CD4-positive, alpha-beta memory T cell (primary cell): ENCODE measurements at regions of chrX and their contacts with region 1.

Region 1: DNA sequence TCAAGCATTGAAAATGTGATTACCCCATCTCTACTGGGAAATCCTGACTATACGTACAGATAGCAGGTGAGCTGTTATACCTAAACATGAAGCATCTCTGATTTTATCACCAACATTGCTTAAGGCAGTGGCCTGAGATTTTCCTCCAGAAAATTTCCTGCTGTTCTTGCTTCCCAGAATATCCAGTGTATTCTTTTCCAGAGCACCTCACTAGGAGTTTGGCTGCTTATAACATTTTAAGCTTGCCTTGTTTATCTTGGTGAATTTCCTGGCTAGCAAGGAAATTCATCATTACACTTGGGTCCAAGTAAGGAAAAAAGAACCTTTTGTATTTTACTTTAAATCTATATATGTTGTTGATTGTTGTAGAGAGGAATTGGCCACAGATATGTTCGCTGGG is 73.0 kb upstream of the CLCN4 start:
- DNase-seq: no peak
- H3K4me3 ChIP-seq: no peak overlapping the region
- H3K4me3 Mint-ChIP-seq: peak overlapping the region in 4 of 8 donors; percentile 10 to 81 (median 68)
- H3K27ac ChIP-seq: peak overlapping the region; percentile 64
- H3K27ac Mint-ChIP-seq: peak overlapping the region; percentile 30 to 98 (median 95)
- H3K4me1 ChIP-seq: peaks cover 55% of the 10 kb centered on the region
- H3K4me1 Mint-ChIP-seq: peaks cover 28 to 55% (median 37%) of the 10 kb centered on the region in 4 donors
- H3K27me3 ChIP-seq: no peaks in the 10 kb centered on the region
- H3K27me3 Mint-ChIP-seq: no peaks in the 10 kb centered on the region

Region 2: GRCh38 chrX:10098270-10098713 is 14.5 kb after region 1 on chrX:
- CTCF ChIA-PET with region 1: interaction called, 21 read pairs
- POLR2A ChIA-PET with region 1: interaction called, 41 read pairs
- intact Hi-C with region 1: loop called (anchors 1 kb)
- DNase-seq: peak; percentile 46 to 82 (median 64)
- H3K4me3 ChIP-seq: peak overlapping the region; percentile 63 to 91
- H3K4me3 Mint-ChIP-seq: peak overlapping the region; percentile 83 to 96 (median 92)
- H3K27ac ChIP-seq: peak overlapping the region; percentile 67
- H3K27ac Mint-ChIP-seq: peak overlapping the region; percentile 89 to 96 (median 95)
- H3K4me1 ChIP-seq: peaks cover 57% of the 10 kb centered on the region
- H3K4me1 Mint-ChIP-seq: peaks cover 22 to 71% (median 43%) of the 10 kb centered on the region in 4 donors
- H3K27me3 ChIP-seq: no peaks in the 10 kb centered on the region
- H3K27me3 Mint-ChIP-seq: no peaks in the 10 kb centered on the region

Region 3: GRCh38 chrX:10206317-10206716 is 122.5 kb after region 1 on chrX:
- CTCF ChIA-PET with region 1: no interaction called
- POLR2A ChIA-PET with region 1: no interaction called
- intact Hi-C with region 1: no loop called
- DNase-seq: no peak
- H3K4me3 ChIP-seq: no peak overlapping the region
- H3K4me3 Mint-ChIP-seq: no peak overlapping the region
- H3K27ac ChIP-seq: no peak overlapping the region
- H3K27ac Mint-ChIP-seq: no peak overlapping the region
- H3K4me1 ChIP-seq: no peaks in the 10 kb centered on the region
- H3K4me1 Mint-ChIP-seq: no peaks in the 10 kb centered on the region
- H3K27me3 ChIP-seq: no peaks in the 10 kb centered on the region
- H3K27me3 Mint-ChIP-seq: peaks cover 0 to 2% of the 10 kb centered on the region in 2 donors